ENCODE measurements at regions of chr20 and their contacts with region 1.

Region 1: DNA sequence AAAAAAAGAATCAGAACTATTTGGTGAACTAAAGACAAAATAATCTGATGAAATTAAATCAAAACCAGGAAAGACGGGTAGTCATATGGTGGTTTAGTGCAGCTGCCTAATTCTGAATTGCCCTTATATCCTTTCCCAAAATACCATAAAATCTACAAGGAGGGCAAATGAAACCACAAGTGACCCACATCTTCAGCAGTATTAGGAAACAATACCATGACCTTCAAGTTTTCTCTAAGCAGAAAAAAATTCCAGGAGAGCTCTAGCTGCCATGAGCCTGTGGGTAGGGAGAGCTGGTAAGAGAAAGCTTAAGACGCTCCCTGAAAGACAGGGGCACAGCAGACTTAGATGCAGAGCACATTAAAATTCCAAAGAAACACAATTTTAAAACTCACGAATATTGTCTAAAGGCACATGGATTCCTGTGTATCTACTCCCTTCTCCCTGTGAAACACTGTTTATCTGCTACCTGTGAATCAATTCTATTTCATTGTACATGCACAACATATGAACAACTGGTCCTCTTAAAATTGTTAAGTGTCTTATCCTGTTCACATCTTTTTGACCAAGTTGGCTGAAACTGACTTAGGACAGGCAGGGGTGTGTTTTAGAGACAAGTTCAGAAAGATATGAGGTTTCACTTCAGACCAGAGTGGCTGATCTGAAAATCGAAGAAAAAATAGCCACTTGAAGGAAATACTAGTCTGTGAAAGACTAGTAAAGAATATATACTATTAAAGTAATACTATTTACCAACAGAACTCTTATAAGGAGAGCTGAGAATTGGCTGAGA is 153.6 kb upstream of the SHLD1 start:
- DNase-seq: no peak
- ATAC-seq: no peak
- H3K4me3 ChIP-seq: no peak overlapping the region
- H3K4me3 Mint-ChIP-seq: peak overlapping the region in 9 of 10 donors; percentile 2 to 74 (median 29)
- H3K27ac ChIP-seq: peak overlapping the region; percentile 52
- H3K27ac Mint-ChIP-seq: peak overlapping the region; percentile 47 to 88 (median 77)
- H3K4me1 ChIP-seq: peaks cover 21 to 58% of the 10 kb centered on the region in 2 donors
- H3K4me1 Mint-ChIP-seq: peaks cover 38 to 76% (median 70%) of the 10 kb centered on the region in 7 donors
- H3K27me3 ChIP-seq: no peaks in the 10 kb centered on the region
- H3K27me3 Mint-ChIP-seq: no peaks in the 10 kb centered on the region

Region 2: DNA sequence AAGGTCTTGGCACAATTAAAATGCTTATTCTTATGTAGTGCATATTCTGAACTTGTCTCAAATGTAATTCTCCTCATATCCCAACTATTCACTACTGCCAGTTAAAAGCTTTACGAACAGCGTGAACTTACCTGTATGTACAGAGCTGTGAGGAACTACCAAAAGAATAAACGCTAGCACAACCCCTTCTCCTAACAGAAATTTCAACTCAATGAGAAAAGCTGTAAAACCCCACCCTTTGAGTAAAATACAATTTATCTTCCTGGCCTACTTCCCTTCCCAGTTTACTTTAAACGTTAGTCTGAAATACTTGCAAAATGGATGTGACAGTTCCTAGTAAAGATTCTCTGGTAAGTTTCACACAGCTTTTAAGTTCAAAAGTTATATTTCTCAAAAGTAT is 11.9 kb before region 1 on chr20:
- CTCF ChIA-PET with region 1: no interaction called
- POLR2A ChIA-PET with region 1: interaction called, 3 read pairs
- intact Hi-C with region 1: loop called in 1 of 2 experiments (anchors 1 kb)
- DNase-seq: no peak
- ATAC-seq: no peak
- H3K4me3 ChIP-seq: no peak overlapping the region
- H3K4me3 Mint-ChIP-seq: peak overlapping the region in 2 of 10 donors; percentile 3 to 37
- H3K27ac ChIP-seq: no peak overlapping the region
- H3K27ac Mint-ChIP-seq: peak overlapping the region in 5 of 9 donors; percentile 5 to 61 (median 43)
- H3K4me1 ChIP-seq: peaks cover 9 to 19% of the 10 kb centered on the region in 2 donors
- H3K4me1 Mint-ChIP-seq: peaks cover 0 to 65% (median 38%) of the 10 kb centered on the region in 7 donors
- H3K27me3 ChIP-seq: no peaks in the 10 kb centered on the region
- H3K27me3 Mint-ChIP-seq: no peaks in the 10 kb centered on the region

Region 3: GRCh38 chr20:5608442-5609161 is 12.0 kb after region 1 on chr20:
- CTCF ChIA-PET with region 1: interaction called, 6 read pairs
- POLR2A ChIA-PET with region 1: interaction called, 3 read pairs
- intact Hi-C with region 1: loop called (anchors 1 kb)
- DNase-seq: peak in 1 of 9 donors; percentile 17
- ATAC-seq: no peak
- H3K4me3 ChIP-seq: peak overlapping the region; percentile 86
- H3K4me3 Mint-ChIP-seq: peak overlapping the region; percentile 90 to 99 (median 97)
- H3K27ac ChIP-seq: peak overlapping the region; percentile 99
- H3K27ac Mint-ChIP-seq: peak overlapping the region; percentile 96 to 100 (median 99)
- H3K4me1 ChIP-seq: peaks cover 35 to 41% of the 10 kb centered on the region in 2 donors
- H3K4me1 Mint-ChIP-seq: peaks cover 32 to 66% (median 56%) of the 10 kb centered on the region in 7 donors
- H3K27me3 ChIP-seq: no peaks in the 10 kb centered on the region
- H3K27me3 Mint-ChIP-seq: no peaks in the 10 kb centered on the region

Measured in naive thymus-derived CD4-positive, alpha-beta T cell (primary cell).